CD14-positive monocyte (primary cell): ENCODE measurements at regions of chr19 and their contacts with region 1.

Region 1: GRCh38 chr19:8444645-8445487 is at the start of gene HNRNPM:
- DNase-seq: peak; percentile 98 to 99 (median 98)
- H3K4me3 ChIP-seq: peak within 1 kb of the TSS; percentile 90 to 94 (median 94)
- H3K4me3 Mint-ChIP-seq: peak within 1 kb of the TSS; percentile 93 to 98
- H3K27ac ChIP-seq: peak within 1 kb of the TSS; percentile 64 to 94
- H3K27ac Mint-ChIP-seq: peak within 1 kb of the TSS; percentile 87 to 97 (median 95)
- H3K4me1 ChIP-seq: peaks cover 25 to 26% of the 10 kb centered on the region in 2 donors
- H3K4me1 Mint-ChIP-seq: peaks cover 38% of the 10 kb centered on the region
- H3K27me3 ChIP-seq: no peaks in the 10 kb centered on the region
- H3K27me3 Mint-ChIP-seq: peaks cover 0 to 7% (median 3%) of the 10 kb centered on the region in 3 donors
- CTCF ChIP-seq: no peak
- polyA plus RNA-seq, gene HNRNPM: 77.0 to 121 (median 116) TPM

Region 2: GRCh38 chr19:8401981-8402411 is 42.9 kb before region 1 on chr19:
- intact Hi-C with region 1: no loop called
- DNase-seq: no peak
- H3K4me3 ChIP-seq: no peak overlapping the region
- H3K4me3 Mint-ChIP-seq: no peak overlapping the region
- H3K27ac ChIP-seq: no peak overlapping the region
- H3K27ac Mint-ChIP-seq: peak overlapping the region in 1 of 7 donors; percentile 50
- H3K4me1 ChIP-seq: no peaks in the 10 kb centered on the region
- H3K4me1 Mint-ChIP-seq: no peaks in the 10 kb centered on the region
- H3K27me3 ChIP-seq: no peaks in the 10 kb centered on the region
- H3K27me3 Mint-ChIP-seq: peaks cover 0 to 1% (median 0%) of the 10 kb centered on the region in 3 donors
- CTCF ChIP-seq: no peak

Region 3: GRCh38 chr19:8412783-8413628 is 31.9 kb before region 1 on chr19 and contains the start of gene MARCHF2:
- intact Hi-C with region 1: loop called (anchors 5 kb)
- DNase-seq: peak; percentile 96 to 97 (median 97)
- H3K4me3 ChIP-seq: peak within 1 kb of the TSS; percentile 75 to 93 (median 91)
- H3K4me3 Mint-ChIP-seq: peak within 1 kb of the TSS; percentile 73 to 84
- H3K27ac ChIP-seq: peak within 1 kb of the TSS in 1 of 2 donors; percentile 73
- H3K27ac Mint-ChIP-seq: peak within 1 kb of the TSS in 3 of 7 donors; percentile 3 to 86 (median 40)
- H3K4me1 ChIP-seq: peaks cover 10 to 19% of the 10 kb centered on the region in 2 donors
- H3K4me1 Mint-ChIP-seq: peaks cover 19% of the 10 kb centered on the region
- H3K27me3 ChIP-seq: no peaks in the 10 kb centered on the region
- H3K27me3 Mint-ChIP-seq: peaks cover 0 to 2% (median 2%) of the 10 kb centered on the region in 3 donors
- CTCF ChIP-seq: peak; percentile 75
- polyA plus RNA-seq, gene MARCHF2: 47.8 to 117 (median 90.8) TPM

Region 4: DNA sequence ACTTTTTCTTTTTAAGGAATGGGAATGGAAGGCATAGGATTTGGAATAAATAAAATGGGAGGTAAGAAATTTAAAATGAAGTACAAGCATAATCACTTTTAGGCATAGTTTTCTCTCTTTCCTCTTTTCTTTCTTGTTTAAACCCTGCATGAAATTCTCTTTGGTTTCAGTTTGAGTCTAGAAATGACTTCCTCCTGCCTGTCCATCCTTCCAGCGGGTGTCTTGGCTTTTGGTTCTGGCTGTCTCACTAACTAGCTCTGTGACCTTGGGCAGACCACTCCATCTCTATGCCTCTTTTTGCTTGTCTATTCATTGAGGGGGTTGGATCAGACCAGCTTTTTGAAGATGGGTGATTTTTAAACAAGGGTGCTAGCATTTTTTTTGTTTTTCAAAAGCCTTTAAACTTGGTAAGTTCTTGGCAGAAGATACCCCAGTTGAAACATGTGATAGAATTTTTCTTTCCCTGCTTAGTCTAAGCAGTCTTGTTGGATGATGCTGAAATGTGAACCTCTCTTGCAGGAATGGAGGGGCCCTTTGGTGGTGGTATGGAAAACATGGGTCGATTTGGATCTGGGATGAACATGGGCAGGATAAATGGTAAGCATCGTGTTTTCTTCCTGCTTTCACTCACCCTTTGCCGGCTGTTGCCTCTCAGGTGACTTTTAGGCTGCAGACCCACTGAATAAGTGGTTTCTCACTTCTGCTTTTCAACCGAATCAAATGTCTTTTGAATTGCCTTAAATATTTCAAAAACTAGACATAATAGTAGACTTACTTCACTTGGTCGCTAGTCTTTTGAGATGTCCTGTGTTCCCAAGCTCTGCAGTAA is 29.0 kb after region 1 on chr19:
- intact Hi-C with region 1: no loop called
- DNase-seq: peak; percentile 22 to 41 (median 27)
- H3K4me3 ChIP-seq: no peak overlapping the region
- H3K4me3 Mint-ChIP-seq: peak overlapping the region; percentile 17 to 57
- H3K27ac ChIP-seq: peak overlapping the region in 1 of 2 donors; percentile 68
- H3K27ac Mint-ChIP-seq: peak overlapping the region; percentile 85 to 92 (median 89)
- H3K4me1 ChIP-seq: peaks cover 24 to 31% of the 10 kb centered on the region in 2 donors
- H3K4me1 Mint-ChIP-seq: peaks cover 32% of the 10 kb centered on the region
- H3K27me3 ChIP-seq: no peaks in the 10 kb centered on the region
- H3K27me3 Mint-ChIP-seq: peaks cover 0 to 2% (median 0%) of the 10 kb centered on the region in 3 donors
- CTCF ChIP-seq: no peak